ENCODE measurements at regions of chr5 and their contacts with region 1.

Region 1: DNA sequence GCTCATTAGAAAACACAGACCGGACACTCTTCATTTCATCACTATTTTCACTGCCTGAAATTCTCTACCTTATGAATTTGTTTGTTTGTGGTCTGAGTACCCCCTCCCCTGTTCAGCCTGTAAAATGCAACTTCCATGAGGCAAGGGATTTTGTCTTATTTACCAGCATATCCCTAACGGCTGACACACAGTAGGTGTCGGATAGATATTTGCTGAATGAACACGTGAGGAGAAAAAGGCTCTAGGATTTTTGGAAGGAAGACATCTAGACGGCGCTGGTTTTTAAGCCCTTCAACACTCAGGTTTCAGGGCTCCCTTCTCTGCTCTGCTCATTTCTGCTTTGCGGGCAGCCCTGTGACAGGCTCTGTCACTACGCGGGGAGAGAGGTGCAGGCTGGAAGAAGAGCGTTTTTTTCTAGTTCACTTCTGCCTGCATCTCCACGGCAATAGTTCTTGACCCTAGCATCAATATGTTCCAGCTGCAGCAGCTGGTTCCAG is 41.0 kb downstream of the KCNMB1 start:
- DNase-seq: no peak
- ATAC-seq: peak; percentile 51
- H3K4me3 ChIP-seq: no peak overlapping the region
- H3K27ac ChIP-seq: no peak overlapping the region
- H3K4me1 ChIP-seq: no peaks in the 10 kb centered on the region
- H3K27me3 ChIP-seq: no peaks in the 10 kb centered on the region

Region 2: DNA sequence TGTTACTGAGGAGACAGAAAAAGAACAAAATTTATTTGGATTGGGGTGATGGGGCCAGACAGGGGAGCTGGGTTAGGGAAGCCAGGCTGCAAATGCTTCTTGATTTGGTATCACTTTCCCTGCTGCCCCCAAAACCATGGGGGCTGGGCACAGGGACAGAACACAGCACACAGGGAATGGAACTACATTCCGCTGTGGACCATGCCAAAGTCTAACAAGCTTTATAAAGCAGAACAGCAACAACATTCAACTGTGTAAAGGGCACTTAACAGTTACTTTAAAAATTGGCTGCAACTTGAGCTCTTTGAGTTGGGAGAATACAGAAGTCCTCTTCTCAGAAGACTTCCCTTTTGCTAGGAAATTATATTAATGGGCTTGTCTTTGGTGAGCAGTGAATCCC is 91.6 kb before region 1 on chr5:
- intact Hi-C with region 1: no loop called
- DNase-seq: no peak
- ATAC-seq: no peak
- H3K4me3 ChIP-seq: no peak overlapping the region
- H3K27ac ChIP-seq: no peak overlapping the region
- H3K4me1 ChIP-seq: no peaks in the 10 kb centered on the region
- H3K27me3 ChIP-seq: peaks cover 0 to 3% of the 10 kb centered on the region in 2 donors

Region 3: GRCh38 chr5:170267431-170268152 is 80.6 kb before region 1 on chr5:
- intact Hi-C with region 1: loop called (anchors 5 to 10 kb)
- DNase-seq: peak; percentile 89 to 90
- ATAC-seq: peak; percentile 81
- H3K4me3 ChIP-seq: peak overlapping the region in 1 of 2 donors; percentile 32
- H3K27ac ChIP-seq: no peak overlapping the region
- H3K4me1 ChIP-seq: no peaks in the 10 kb centered on the region
- H3K27me3 ChIP-seq: no peaks in the 10 kb centered on the region

Region 4: DNA sequence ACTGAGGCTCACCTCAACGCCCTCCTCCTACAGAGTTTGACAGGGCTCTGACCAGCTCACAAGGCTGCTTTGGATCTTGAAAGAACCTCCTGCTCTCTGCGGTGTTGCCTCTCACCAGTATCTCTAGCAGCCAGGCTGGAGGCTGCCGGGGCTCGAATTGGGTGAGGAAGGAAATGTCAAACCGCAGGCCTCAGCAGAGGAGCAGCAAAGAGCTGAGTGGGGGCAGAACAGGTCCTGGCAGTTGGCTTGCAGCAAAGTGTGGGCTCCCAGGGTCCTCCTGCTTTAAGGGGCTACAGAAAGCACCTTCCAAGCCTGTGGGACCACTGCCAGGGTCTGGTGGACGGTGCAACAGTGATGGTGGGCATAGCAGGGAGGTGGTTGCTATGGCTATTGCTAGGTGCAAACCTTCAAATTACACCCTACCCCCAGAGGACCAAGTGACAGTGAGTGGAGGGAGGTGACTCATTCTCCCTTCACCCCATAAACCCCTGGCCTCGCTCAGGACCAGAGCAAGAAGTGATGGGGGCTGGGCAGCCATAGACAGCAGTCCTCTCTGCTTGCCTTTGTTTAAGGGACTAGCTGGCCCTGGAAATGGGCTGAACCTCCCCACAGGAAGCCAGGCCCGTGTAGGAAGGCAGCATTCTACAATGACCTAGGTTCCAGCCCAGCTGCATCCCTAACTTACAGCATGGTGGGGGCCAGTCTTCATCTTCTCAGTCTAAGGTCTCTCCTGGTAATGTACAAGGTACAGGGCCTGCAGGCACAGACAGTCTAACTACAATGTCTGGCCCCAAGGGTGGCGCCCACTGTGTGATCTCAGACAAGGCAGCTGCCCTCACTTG is 69.4 kb before region 1 on chr5:
- intact Hi-C with region 1: loop called in 1 of 2 experiments (anchors 10 kb)
- DNase-seq: peak; percentile 81 to 82
- ATAC-seq: peak; percentile 31
- H3K4me3 ChIP-seq: no peak overlapping the region
- H3K27ac ChIP-seq: no peak overlapping the region
- H3K4me1 ChIP-seq: no peaks in the 10 kb centered on the region
- H3K27me3 ChIP-seq: no peaks in the 10 kb centered on the region

Region 5: GRCh38 chr5:170597109-170597751 is 249.0 kb after region 1 on chr5:
- intact Hi-C with region 1: no loop called
- DNase-seq: no peak
- ATAC-seq: no peak
- H3K4me3 ChIP-seq: no peak overlapping the region
- H3K27ac ChIP-seq: no peak overlapping the region
- H3K4me1 ChIP-seq: no peaks in the 10 kb centered on the region
- H3K27me3 ChIP-seq: no peaks in the 10 kb centered on the region

Region 6: GRCh38 chr5:170638454-170639220 is 290.5 kb after region 1 on chr5:
- intact Hi-C with region 1: no loop called
- DNase-seq: peak; percentile 73 to 86
- ATAC-seq: peak; percentile 61
- H3K4me3 ChIP-seq: no peak overlapping the region
- H3K27ac ChIP-seq: no peak overlapping the region
- H3K4me1 ChIP-seq: no peaks in the 10 kb centered on the region
- H3K27me3 ChIP-seq: no peaks in the 10 kb centered on the region

Region 7: DNA sequence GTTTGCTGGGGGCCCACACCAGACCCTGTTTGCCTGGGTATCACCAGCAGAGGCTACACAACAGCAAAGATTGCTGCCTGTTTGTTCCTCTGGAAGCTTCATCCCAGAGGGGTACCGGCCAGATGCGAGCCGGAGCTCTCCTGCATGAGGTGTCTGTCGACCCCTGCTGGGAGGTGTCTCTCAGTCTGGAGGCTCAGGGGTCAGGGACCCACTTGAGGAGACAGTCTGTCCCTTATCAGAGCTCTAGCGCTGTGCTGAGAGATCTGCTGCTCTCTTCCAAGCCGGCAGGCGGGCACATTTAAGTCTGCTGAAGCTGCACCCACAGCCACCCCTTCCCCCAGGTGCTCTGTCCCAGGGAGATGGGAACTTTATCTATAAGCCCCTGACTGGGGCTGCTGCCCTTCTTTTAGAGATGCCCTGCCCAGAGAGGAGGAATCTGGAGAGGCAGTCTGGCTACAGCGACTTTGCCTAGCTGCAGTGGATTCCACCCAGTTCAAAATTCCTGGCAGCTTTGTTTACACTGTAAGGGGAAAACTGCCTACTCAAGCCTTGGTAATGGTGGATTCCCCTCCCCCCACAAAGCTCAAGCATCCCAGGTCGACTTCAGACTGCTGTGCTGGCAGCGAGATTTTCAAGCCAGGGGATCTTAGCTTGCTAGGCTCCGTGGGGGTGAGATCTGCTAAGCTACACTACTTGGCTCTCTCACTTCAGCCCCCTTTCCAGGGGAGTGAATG is 754.9 kb after region 1 on chr5:
- intact Hi-C with region 1: no loop called
- DNase-seq: no peak
- ATAC-seq: no peak
- H3K4me3 ChIP-seq: no peak overlapping the region
- H3K27ac ChIP-seq: no peak overlapping the region
- H3K4me1 ChIP-seq: no peaks in the 10 kb centered on the region
- H3K27me3 ChIP-seq: no peaks in the 10 kb centered on the region

Measured in aorta (tissue), 5 donors.